MCF 10A (cell line): ENCODE measurements at regions of chr5 and their contacts with region 1.

Region 1: DNA sequence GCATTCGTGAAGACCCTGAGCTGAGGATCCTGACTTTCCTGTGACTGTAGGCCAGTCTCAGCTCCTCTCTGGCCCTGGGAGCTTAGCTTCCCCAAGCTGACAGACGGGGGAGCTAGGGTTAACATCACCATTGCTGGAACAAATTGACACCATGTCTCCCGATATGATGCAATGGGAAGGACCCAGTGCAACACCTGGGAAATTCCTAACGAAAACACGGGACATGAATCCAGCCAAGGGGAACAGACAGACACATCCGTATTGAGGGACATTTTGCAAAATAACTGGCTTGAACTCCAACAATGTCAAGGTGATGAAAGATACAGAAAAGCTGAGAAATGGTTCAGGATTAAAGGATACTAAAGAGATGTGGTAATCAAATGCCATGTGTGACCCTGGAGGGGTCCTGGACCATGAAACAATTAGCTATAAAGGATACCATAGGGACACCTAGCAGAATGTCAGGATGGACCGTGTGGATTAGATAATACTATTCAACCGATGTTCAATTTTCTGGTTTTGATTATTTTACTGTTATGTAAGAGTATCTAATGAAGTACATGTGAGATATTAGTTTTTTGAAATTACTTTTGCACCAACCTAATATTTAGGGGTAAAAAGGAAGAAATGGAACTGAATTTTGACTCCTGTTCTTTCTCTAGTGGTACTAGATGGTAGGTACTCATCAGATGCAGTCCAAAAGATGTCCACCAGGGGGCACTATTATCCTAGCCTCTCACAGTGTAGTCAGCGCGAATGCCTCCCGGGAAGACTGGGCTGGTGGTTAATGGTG is 52.7 kb downstream of the NDST1 start:
- DNase-seq: peak; percentile 97
- H3K4me3 Mint-ChIP-seq: peak overlapping the region; percentile 17
- H3K27ac Mint-ChIP-seq: peak overlapping the region; percentile 24
- H3K4me1 Mint-ChIP-seq: peaks cover 14% of the 10 kb centered on the region
- H3K27me3 Mint-ChIP-seq: no peaks in the 10 kb centered on the region
- CTCF ChIP-seq: peak; percentile 94

Region 2: GRCh38 chr5:149605998-149606724 is 954.4 kb before region 1 on chr5:
- CTCF ChIA-PET with region 1: no interaction called
- POLR2A ChIA-PET with region 1: no interaction called
- intact Hi-C with region 1: no loop called
- DNase-seq: peak; percentile 99
- H3K4me3 Mint-ChIP-seq: no peak overlapping the region
- H3K27ac Mint-ChIP-seq: peak overlapping the region; percentile 91
- H3K4me1 Mint-ChIP-seq: peaks cover 48% of the 10 kb centered on the region
- H3K27me3 Mint-ChIP-seq: no peaks in the 10 kb centered on the region
- CTCF ChIP-seq: no peak

Region 3: DNA sequence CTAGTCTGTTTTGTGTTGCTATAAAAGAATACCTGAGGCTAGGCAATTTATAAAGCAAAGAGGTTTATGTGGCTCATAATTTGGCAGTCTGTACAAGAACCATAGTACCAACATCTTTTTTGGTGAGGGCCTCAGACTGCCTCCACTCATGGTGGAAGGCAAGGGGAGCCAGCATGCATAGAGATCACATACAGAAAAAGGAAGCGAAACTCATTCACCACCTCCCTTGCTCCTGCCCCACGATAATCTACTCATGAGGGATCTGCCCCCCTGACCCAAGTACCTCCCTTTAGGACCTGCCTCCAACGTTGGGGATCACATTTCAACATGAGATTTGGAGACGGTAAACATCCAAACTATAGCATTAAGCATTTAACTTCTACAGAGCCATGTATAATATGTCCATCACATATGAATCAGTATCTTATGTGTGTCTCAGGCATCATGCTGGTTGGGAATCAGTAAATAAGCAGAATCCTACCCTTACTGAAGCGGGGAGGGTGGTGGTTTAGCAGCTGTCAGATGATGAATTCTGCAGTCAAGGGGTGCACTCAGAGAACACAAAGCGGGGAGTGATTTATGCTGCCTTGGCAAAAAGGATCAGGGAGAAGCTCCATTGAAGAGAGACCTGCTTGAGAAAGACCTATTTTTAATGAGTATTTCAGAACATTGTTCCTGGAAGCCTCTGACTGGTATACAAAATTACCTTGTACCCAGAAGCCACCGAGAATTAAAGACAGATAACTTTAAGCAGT is 525.3 kb before region 1 on chr5:
- CTCF ChIA-PET with region 1: no interaction called
- POLR2A ChIA-PET with region 1: no interaction called
- intact Hi-C with region 1: no loop called
- DNase-seq: no peak
- H3K4me3 Mint-ChIP-seq: no peak overlapping the region
- H3K27ac Mint-ChIP-seq: peak overlapping the region; percentile 36
- H3K4me1 Mint-ChIP-seq: peaks cover 31% of the 10 kb centered on the region
- H3K27me3 Mint-ChIP-seq: no peaks in the 10 kb centered on the region
- CTCF ChIP-seq: no peak

Region 4: DNA sequence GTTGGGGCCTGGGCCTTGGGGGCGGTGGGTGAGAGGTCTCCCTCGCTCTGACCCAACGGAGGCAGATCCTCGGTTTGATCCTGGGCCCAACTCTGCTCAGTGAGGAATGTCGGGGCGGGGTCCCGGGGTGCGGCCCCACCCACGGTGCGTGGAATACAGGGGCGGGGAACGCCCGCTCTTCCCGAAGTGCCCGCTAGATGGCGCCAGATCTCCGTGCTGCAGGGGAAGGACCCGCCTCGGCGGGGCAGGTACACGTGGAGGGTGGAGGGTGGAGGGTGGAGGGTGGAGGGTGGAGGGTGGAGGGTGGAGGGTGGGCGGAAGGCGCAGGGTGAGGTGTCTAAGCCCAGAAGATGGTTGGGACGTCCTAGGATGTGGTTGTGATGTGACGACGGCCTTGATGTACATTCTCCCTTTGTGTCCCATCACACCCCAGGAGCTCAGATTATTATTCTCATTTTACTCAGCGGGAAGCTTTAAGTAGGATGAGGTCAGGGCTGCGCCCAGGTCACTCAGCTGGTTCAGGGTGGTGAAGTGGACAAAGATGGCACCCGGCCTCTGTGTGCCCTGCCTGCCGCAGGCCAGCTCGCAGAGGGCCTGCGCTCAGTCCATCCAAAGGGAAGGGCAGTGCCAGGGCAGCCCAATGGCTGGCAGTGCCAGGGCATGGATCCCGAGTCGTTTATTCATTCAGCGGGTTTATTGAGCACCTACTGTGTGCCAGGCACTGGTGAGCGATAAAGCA is 101.6 kb before region 1 on chr5:
- CTCF ChIA-PET with region 1: interaction called, 103 read pairs
- POLR2A ChIA-PET with region 1: interaction called, 5 read pairs
- intact Hi-C with region 1: loop called (anchors 1 kb)
- DNase-seq: peak; percentile 76
- H3K4me3 Mint-ChIP-seq: no peak overlapping the region
- H3K27ac Mint-ChIP-seq: peak overlapping the region; percentile 57
- H3K4me1 Mint-ChIP-seq: peaks cover 13% of the 10 kb centered on the region
- H3K27me3 Mint-ChIP-seq: no peaks in the 10 kb centered on the region
- CTCF ChIP-seq: peak; percentile 98

Region 5: GRCh38 chr5:150573867-150574817 is 13.5 kb after region 1 on chr5:
- CTCF ChIA-PET with region 1: interaction called, 22 read pairs
- POLR2A ChIA-PET with region 1: no interaction called
- intact Hi-C with region 1: no loop called
- DNase-seq: no peak
- H3K4me3 Mint-ChIP-seq: no peak overlapping the region
- H3K27ac Mint-ChIP-seq: no peak overlapping the region
- H3K4me1 Mint-ChIP-seq: no peaks in the 10 kb centered on the region
- H3K27me3 Mint-ChIP-seq: no peaks in the 10 kb centered on the region
- CTCF ChIP-seq: no peak

Region 6: GRCh38 chr5:150656191-150657132 is 95.9 kb after region 1 on chr5:
- CTCF ChIA-PET with region 1: interaction called, 429 read pairs
- POLR2A ChIA-PET with region 1: interaction called, 20 read pairs
- intact Hi-C with region 1: loop called (anchors 1 kb)
- DNase-seq: peak; percentile 58
- H3K4me3 Mint-ChIP-seq: peak overlapping the region; percentile 71
- H3K27ac Mint-ChIP-seq: no peak overlapping the region
- H3K4me1 Mint-ChIP-seq: peaks cover 14% of the 10 kb centered on the region
- H3K27me3 Mint-ChIP-seq: peaks cover 11% of the 10 kb centered on the region
- CTCF ChIP-seq: peak; percentile 99

Region 7: GRCh38 chr5:150700594-150701293 is 140.1 kb after region 1 on chr5 and contains the start of gene RBM22:
- CTCF ChIA-PET with region 1: interaction called, 109 read pairs
- POLR2A ChIA-PET with region 1: interaction called, 23 read pairs
- intact Hi-C with region 1: loop called (anchors 1 kb)
- DNase-seq: peak; percentile 95
- H3K4me3 Mint-ChIP-seq: no peak within 1 kb of the TSS
- H3K27ac Mint-ChIP-seq: no peak within 1 kb of the TSS
- H3K4me1 Mint-ChIP-seq: peaks cover 6% of the 10 kb centered on the region
- H3K27me3 Mint-ChIP-seq: no peaks in the 10 kb centered on the region
- CTCF ChIP-seq: peak; percentile 76
- total RNA-seq, gene RBM22: 66.0 and 66.9 TPM in 2 replicates

Region 8: GRCh38 chr5:150758531-150759333 is 198.1 kb after region 1 on chr5 and contains the start of gene DCTN4:
- CTCF ChIA-PET with region 1: interaction called, 6 read pairs
- POLR2A ChIA-PET with region 1: no interaction called
- intact Hi-C with region 1: loop called (anchors 1 kb)
- DNase-seq: peak; percentile 100
- H3K4me3 Mint-ChIP-seq: no peak within 1 kb of the TSS
- H3K27ac Mint-ChIP-seq: no peak within 1 kb of the TSS
- H3K4me1 Mint-ChIP-seq: peaks cover 34% of the 10 kb centered on the region
- H3K27me3 Mint-ChIP-seq: no peaks in the 10 kb centered on the region
- CTCF ChIP-seq: no peak
- total RNA-seq, gene DCTN4: 122 and 143 TPM in 2 replicates

Region 9: DNA sequence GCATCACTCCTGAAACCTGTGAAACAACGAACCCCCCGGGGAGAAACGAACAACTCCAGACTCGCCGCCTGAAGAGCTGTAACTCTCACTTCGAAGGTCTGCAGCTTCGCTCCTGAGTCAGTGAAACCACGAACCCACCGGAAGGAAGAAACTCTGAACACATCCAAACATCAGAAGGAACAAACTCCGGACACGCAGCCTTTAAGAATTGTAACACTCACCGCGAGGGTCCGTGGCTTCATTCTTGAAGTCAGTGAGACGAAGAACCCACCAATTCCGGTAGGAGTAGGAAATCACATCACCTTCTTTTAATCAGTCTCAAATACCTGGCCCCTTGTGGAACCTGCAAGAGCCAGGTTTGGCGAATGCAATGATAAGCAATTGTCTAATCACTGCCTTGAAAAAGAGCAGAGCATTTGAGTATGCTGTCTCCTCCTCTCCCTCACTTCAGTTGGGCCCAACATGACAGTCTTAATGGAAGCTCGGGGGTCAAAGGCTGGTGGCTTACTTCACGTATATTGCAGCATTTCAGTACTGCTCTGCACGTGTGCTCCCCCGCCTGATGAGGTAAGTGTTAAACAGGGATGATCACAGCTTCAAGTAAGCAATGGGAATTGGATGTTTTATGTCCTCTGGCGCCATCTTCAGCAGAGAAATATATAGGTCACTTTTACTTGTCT is 286.2 kb after region 1 on chr5:
- CTCF ChIA-PET with region 1: interaction called, 92 read pairs
- POLR2A ChIA-PET with region 1: interaction called, 4 read pairs
- intact Hi-C with region 1: loop called (anchors 1 kb)
- DNase-seq: peak; percentile 92
- H3K4me3 Mint-ChIP-seq: no peak overlapping the region
- H3K27ac Mint-ChIP-seq: no peak overlapping the region
- H3K4me1 Mint-ChIP-seq: no peaks in the 10 kb centered on the region
- H3K27me3 Mint-ChIP-seq: no peaks in the 10 kb centered on the region
- CTCF ChIP-seq: peak; percentile 85